Mammary epithelial cell (primary cell): ENCODE measurements at regions of chr1 and their contacts with region 1.

Region 1: DNA sequence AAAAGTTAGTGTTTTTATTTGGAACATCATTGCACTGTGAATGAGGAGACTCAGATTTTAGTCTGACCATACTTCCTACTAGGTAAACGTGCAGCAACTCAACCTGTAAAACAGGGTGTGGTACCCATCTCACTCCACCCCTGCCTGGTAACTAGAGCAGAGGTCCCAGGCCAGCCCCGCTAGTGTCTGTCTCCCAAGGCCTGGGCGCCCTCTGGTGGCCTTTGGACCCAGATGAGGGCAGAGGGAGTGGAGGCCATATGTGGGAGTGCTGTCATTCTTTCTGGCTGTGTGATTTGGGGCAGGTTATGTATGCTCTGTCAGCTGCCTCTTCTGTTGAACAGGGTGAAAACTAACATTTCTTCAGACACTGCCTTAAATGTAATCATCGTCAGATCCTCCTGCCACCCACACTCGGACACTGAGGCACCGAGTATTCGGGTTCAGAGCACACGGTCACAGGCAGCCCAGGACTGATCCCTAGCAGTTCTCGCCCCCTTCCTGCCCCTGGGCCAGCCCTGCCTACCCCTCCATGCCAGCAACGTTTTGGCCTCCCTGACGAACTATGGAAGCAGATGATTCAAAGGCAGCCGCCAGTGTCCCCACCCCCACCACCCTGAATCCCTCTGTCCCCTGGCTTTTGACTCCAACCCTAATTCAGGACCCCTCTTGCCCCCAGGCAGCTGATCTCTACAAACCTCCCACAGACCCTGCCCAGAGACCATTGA is 76.0 kb downstream of the CD247 start:
- DNase-seq: peak; percentile 73
- H3K4me3 ChIP-seq: no peak overlapping the region
- H3K27ac ChIP-seq: no peak overlapping the region
- H3K4me1 ChIP-seq: peaks cover 6% of the 10 kb centered on the region
- H3K27me3 ChIP-seq: no peaks in the 10 kb centered on the region
- CTCF ChIP-seq: peak; percentile 92

Region 2: DNA sequence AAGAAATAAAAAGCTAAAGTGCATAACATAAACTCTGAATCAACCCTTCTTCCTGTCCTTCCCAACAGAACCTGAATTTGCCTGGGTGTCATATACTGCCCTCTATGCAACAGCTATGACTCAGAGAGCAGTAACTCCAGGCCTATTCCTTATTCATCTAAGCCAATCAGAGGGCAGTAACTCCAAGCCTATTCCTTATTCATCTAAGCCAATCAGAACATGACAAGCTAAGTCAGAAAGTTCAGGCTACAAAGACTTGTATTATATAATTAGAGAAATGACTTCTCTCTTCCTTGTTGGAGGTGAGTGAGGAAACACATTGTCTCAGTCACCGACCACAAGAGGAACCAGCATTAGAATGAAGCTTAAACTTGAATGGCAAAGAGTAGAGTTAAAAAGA is 540.0 kb before region 1 on chr1:
- CTCF ChIA-PET with region 1: no interaction called
- dilution Hi-C with region 1: no loop called
- in situ Hi-C with region 1: loop called in 1 of 2 experiments (anchors 25 kb)
- intact Hi-C with region 1: loop called (anchors 10 kb)
- DNase-seq: peak; percentile 84
- H3K4me3 ChIP-seq: no peak overlapping the region
- H3K27ac ChIP-seq: no peak overlapping the region
- H3K4me1 ChIP-seq: peaks cover 8% of the 10 kb centered on the region
- H3K27me3 ChIP-seq: no peaks in the 10 kb centered on the region
- CTCF ChIP-seq: peak in 1 of 2 donors; percentile 6

Region 3: GRCh38 chr1:166910396-166910994 is 531.8 kb before region 1 on chr1:
- CTCF ChIA-PET with region 1: no interaction called
- dilution Hi-C with region 1: no loop called
- in situ Hi-C with region 1: loop called in 1 of 2 experiments (anchors 25 kb)
- intact Hi-C with region 1: loop called (anchors 10 kb)
- DNase-seq: peak; percentile 87
- H3K4me3 ChIP-seq: no peak overlapping the region
- H3K27ac ChIP-seq: no peak overlapping the region
- H3K4me1 ChIP-seq: peaks cover 3% of the 10 kb centered on the region
- H3K27me3 ChIP-seq: no peaks in the 10 kb centered on the region
- CTCF ChIP-seq: peak; percentile 69 to 78

Region 4: GRCh38 chr1:167263819-167264464 is 178.3 kb before region 1 on chr1:
- CTCF ChIA-PET with region 1: no interaction called
- dilution Hi-C with region 1: no loop called
- in situ Hi-C with region 1: loop called in 1 of 2 experiments (anchors 10 kb)
- intact Hi-C with region 1: loop called (anchors 1 kb)
- DNase-seq: no peak
- H3K4me3 ChIP-seq: no peak overlapping the region
- H3K27ac ChIP-seq: no peak overlapping the region
- H3K4me1 ChIP-seq: no peaks in the 10 kb centered on the region
- H3K27me3 ChIP-seq: no peaks in the 10 kb centered on the region
- CTCF ChIP-seq: no peak

Region 5: DNA sequence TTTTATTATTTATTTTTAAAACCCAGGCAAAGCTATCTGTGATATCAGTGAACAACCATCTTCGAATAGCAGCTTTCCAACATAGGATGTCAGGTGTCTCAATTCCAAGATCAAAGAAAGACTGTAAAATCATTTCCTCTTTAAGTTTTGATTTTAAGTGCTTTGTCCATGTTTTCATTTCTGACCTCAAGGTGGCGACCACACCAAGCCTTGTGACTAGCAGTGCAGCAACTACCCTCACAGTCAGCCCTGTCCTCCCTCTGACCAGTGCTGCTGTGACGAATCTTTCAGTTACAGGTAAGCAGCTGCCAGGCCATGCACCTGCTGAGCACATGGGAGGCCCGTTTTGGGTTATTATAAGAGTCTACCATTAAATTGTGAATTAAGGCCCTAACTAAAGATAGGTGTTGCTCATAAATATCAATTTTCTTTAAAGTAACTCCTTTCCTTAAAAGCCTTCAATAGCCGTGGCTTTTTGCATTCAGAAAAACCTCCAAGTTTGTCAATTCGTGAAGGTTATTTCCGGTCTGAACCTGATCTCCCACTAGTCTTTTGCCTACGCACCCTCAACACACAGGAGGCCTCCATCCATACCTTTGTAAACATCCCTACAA is 40.9 kb before region 1 on chr1:
- CTCF ChIA-PET with region 1: no interaction called
- dilution Hi-C with region 1: no loop called
- in situ Hi-C with region 1: no loop called
- intact Hi-C with region 1: loop called (anchors 1 kb)
- DNase-seq: peak; percentile 57
- H3K4me3 ChIP-seq: no peak overlapping the region
- H3K27ac ChIP-seq: no peak overlapping the region
- H3K4me1 ChIP-seq: peaks cover 3% of the 10 kb centered on the region
- H3K27me3 ChIP-seq: no peaks in the 10 kb centered on the region
- CTCF ChIP-seq: peak; percentile 39 to 64